B cell (primary cell): ENCODE measurements at regions of chr12 and their contacts with region 1.

Region 1: DNA sequence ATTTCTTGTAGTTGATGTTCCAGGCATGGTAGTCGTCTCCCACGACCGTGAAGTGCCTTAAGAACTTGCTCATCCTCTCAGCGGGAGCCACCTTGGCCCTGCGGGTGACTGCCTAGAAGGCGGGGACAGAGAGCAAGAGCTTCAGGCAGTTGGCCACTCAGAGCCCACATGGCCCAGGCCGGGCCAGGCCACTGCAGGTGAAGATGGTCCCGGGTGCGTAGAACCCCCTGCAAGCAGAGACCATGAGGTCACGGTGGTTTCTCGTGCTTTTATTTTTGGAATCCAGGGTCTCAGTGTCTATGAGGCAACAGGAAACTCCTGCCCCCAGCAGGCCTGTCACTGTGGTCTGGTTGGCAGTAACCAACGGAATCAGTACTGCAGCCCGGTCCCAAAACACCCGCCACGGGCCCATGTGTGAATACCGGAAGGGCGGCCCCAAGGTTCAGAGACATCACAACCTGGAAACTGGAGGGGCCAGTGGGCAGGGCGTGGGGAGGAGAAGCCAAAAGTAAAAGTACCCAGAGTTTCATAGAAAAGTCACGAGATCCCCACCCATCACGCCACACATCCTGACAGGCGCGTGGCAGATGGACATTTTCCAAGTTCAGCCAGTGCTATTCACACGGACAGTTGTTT is 27.5 kb downstream of the HVCN1 start:
- DNase-seq: peak; percentile 93
- ATAC-seq: peak; percentile 85
- H3K4me3 ChIP-seq: peak overlapping the region in 4 of 5 experiments; percentile 5 to 44 (median 16)
- H3K4me3 Mint-ChIP-seq: peak overlapping the region; percentile 92
- H3K27ac ChIP-seq: peak overlapping the region; percentile 96 to 99
- H3K27ac Mint-ChIP-seq: peak overlapping the region; percentile 98
- H3K4me1 ChIP-seq: peaks cover 59 to 82% of the 10 kb centered on the region in 2 donors
- H3K4me1 Mint-ChIP-seq: peaks cover 81% of the 10 kb centered on the region
- H3K27me3 ChIP-seq: no peaks in the 10 kb centered on the region
- H3K27me3 Mint-ChIP-seq: no peaks in the 10 kb centered on the region
- CTCF ChIP-seq: no peak

Region 2: GRCh38 chr12:110647631-110648040 is 13.8 kb before region 1 on chr12:
- CTCF ChIA-PET with region 1: interaction called, 5 read pairs
- POLR2A ChIA-PET with region 1: interaction called, 4 read pairs
- intact Hi-C with region 1: loop called (anchors 1 kb)
- DNase-seq: peak; percentile 95
- ATAC-seq: peak; percentile 85
- H3K4me3 ChIP-seq: peak overlapping the region in 1 of 5 experiments; percentile 5
- H3K4me3 Mint-ChIP-seq: peak overlapping the region; percentile 79
- H3K27ac ChIP-seq: peak overlapping the region; percentile 90
- H3K27ac Mint-ChIP-seq: peak overlapping the region; percentile 98
- H3K4me1 ChIP-seq: peaks cover 90% of the 10 kb centered on the region in 2 donors
- H3K4me1 Mint-ChIP-seq: peaks cover 91% of the 10 kb centered on the region
- H3K27me3 ChIP-seq: no peaks in the 10 kb centered on the region
- H3K27me3 Mint-ChIP-seq: no peaks in the 10 kb centered on the region
- CTCF ChIP-seq: no peak

Region 3: DNA sequence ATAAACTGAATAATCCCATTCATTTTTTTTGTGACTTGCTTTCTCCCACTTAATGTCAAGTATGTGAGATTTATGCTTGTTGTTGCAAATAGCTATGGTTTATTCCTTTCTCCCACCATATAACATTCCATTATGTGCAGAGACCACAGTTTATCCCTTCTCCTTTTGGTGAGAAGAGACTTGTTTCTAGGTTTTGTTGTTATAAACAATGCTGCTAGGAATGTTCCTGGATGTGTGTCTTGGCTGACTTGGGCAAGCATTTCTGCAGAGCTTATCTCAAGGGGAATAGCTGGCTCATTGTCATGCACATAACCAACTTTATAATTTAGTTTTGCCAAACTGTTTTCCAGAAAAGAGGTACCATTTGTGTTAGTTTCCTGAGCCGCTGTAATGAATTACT is 128.8 kb after region 1 on chr12:
- CTCF ChIA-PET with region 1: no interaction called
- POLR2A ChIA-PET with region 1: no interaction called
- intact Hi-C with region 1: no loop called
- DNase-seq: no peak
- ATAC-seq: no peak
- H3K4me3 ChIP-seq: no peak overlapping the region
- H3K4me3 Mint-ChIP-seq: no peak overlapping the region
- H3K27ac ChIP-seq: no peak overlapping the region
- H3K27ac Mint-ChIP-seq: no peak overlapping the region
- H3K4me1 ChIP-seq: no peaks in the 10 kb centered on the region
- H3K4me1 Mint-ChIP-seq: no peaks in the 10 kb centered on the region
- H3K27me3 ChIP-seq: no peaks in the 10 kb centered on the region
- H3K27me3 Mint-ChIP-seq: no peaks in the 10 kb centered on the region
- CTCF ChIP-seq: no peak